ENCODE measurements at regions of chr15 and their contacts with region 1.

Region 1: GRCh38 chr15:84035399-84035766 is 200.2 kb upstream of the GOLGA6L4 start:
- DNase-seq: no peak
- H3K4me3 Mint-ChIP-seq: no peak overlapping the region
- H3K27ac Mint-ChIP-seq: no peak overlapping the region
- H3K4me1 Mint-ChIP-seq: no peaks in the 10 kb centered on the region
- H3K27me3 Mint-ChIP-seq: peaks cover 24% of the 10 kb centered on the region

Region 2: GRCh38 chr15:83436458-83437158 is 598.8 kb before region 1 on chr15:
- CTCF ChIA-PET with region 1: no interaction called
- intact Hi-C with region 1: loop called (anchors 10 kb)
- DNase-seq: no peak
- H3K4me3 Mint-ChIP-seq: no peak overlapping the region
- H3K27ac Mint-ChIP-seq: no peak overlapping the region
- H3K4me1 Mint-ChIP-seq: peaks cover 5% of the 10 kb centered on the region
- H3K27me3 Mint-ChIP-seq: peaks cover 7% of the 10 kb centered on the region

Region 3: DNA sequence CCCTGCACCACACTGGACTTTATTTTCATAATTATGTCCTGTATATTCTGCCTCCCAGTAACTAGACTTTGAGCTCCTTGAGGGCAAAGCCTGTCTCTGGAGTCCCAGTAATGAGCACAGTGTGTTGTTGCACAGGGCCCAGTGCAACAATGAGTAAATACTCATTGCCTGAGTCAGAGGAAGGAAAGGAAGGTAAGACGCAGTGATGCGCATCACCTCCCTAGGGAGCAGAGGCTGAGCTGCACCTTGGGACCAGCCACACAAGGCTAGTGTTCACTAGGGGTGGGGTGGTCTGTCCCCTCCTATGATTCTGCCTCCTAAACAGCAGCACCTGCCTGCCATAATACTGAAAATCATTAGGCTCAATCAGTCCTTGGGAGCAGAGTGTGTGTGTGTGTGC is 468.1 kb before region 1 on chr15:
- CTCF ChIA-PET with region 1: interaction called, 3 read pairs
- intact Hi-C with region 1: loop called (anchors 2 kb)
- DNase-seq: no peak
- H3K4me3 Mint-ChIP-seq: no peak overlapping the region
- H3K27ac Mint-ChIP-seq: no peak overlapping the region
- H3K4me1 Mint-ChIP-seq: no peaks in the 10 kb centered on the region
- H3K27me3 Mint-ChIP-seq: no peaks in the 10 kb centered on the region